SK-N-SH (cell line): ENCODE measurements at regions of chr6 and their contacts with region 1.

Region 1: GRCh38 chr6:151323791-151324487 is 67.4 kb downstream of the ZBTB2 start:
- DNase-seq: peak; percentile 81
- H3K4me3 ChIP-seq: peak overlapping the region in 1 of 2 experiments; percentile 22; a peak in 1 of 4 replicates
- H3K27ac ChIP-seq: peak overlapping the region; percentile 35 to 76
- H3K4me1 ChIP-seq: peaks cover 7 to 14% of the 10 kb centered on the region in 2 experiments; a peak in 3 of 4 replicates
- H3K27me3 ChIP-seq: no peaks in the 10 kb centered on the region
- CTCF ChIP-seq: peak; percentile 90
- EP300 ChIP-seq: no peak
- RAD21 ChIP-seq: peak; percentile 97

Region 2: GRCh38 chr6:150891888-150892485 is 432.0 kb before region 1 on chr6:
- CTCF ChIA-PET with region 1: interaction called, 421 read pairs
- POLR2A ChIA-PET with region 1: interaction called, 3 read pairs
- DNase-seq: peak; percentile 53
- H3K4me3 ChIP-seq: no peak overlapping the region; a peak in 1 of 4 replicates
- H3K27ac ChIP-seq: no peak overlapping the region
- H3K4me1 ChIP-seq: peaks cover 14% of the 10 kb centered on the region in 2 experiments; a peak in 2 of 4 replicates
- H3K27me3 ChIP-seq: no peaks in the 10 kb centered on the region
- CTCF ChIP-seq: peak; percentile 77
- EP300 ChIP-seq: no peak
- RAD21 ChIP-seq: peak; percentile 92

Region 3: GRCh38 chr6:151004415-151005024 is 319.4 kb before region 1 on chr6:
- CTCF ChIA-PET with region 1: interaction called, 371 read pairs
- POLR2A ChIA-PET with region 1: interaction called, 3 read pairs
- DNase-seq: no peak
- H3K4me3 ChIP-seq: no peak overlapping the region
- H3K27ac ChIP-seq: peak overlapping the region; percentile 47 to 74; a peak in 3 of 4 replicates
- H3K4me1 ChIP-seq: peaks cover 3 to 23% of the 10 kb centered on the region in 2 experiments; a peak in 2 of 4 replicates
- H3K27me3 ChIP-seq: no peaks in the 10 kb centered on the region
- CTCF ChIP-seq: no peak
- EP300 ChIP-seq: peak; percentile 18 to 66; a peak in 1 of 4 replicates
- RAD21 ChIP-seq: no peak

Region 4: GRCh38 chr6:151054311-151054710 is 269.6 kb before region 1 on chr6:
- CTCF ChIA-PET with region 1: interaction called, 16 read pairs
- POLR2A ChIA-PET with region 1: no interaction called
- DNase-seq: no peak
- H3K4me3 ChIP-seq: no peak overlapping the region
- H3K27ac ChIP-seq: no peak overlapping the region
- H3K4me1 ChIP-seq: peaks cover 13 to 39% of the 10 kb centered on the region in 2 experiments; a peak in 3 of 4 replicates
- H3K27me3 ChIP-seq: no peaks in the 10 kb centered on the region
- CTCF ChIP-seq: no peak
- EP300 ChIP-seq: no peak
- RAD21 ChIP-seq: no peak

Region 5: GRCh38 chr6:151209071-151209831 is 114.7 kb before region 1 on chr6:
- CTCF ChIA-PET with region 1: interaction called, 10 read pairs
- POLR2A ChIA-PET with region 1: no interaction called
- DNase-seq: peak; percentile 54
- H3K4me3 ChIP-seq: peak overlapping the region; percentile 15 to 37; a peak in 2 of 4 replicates
- H3K27ac ChIP-seq: no peak overlapping the region
- H3K4me1 ChIP-seq: peaks cover 0 to 4% of the 10 kb centered on the region in 2 experiments; a peak in 1 of 4 replicates
- H3K27me3 ChIP-seq: no peaks in the 10 kb centered on the region
- CTCF ChIP-seq: no peak
- EP300 ChIP-seq: no peak
- RAD21 ChIP-seq: no peak

Region 6: DNA sequence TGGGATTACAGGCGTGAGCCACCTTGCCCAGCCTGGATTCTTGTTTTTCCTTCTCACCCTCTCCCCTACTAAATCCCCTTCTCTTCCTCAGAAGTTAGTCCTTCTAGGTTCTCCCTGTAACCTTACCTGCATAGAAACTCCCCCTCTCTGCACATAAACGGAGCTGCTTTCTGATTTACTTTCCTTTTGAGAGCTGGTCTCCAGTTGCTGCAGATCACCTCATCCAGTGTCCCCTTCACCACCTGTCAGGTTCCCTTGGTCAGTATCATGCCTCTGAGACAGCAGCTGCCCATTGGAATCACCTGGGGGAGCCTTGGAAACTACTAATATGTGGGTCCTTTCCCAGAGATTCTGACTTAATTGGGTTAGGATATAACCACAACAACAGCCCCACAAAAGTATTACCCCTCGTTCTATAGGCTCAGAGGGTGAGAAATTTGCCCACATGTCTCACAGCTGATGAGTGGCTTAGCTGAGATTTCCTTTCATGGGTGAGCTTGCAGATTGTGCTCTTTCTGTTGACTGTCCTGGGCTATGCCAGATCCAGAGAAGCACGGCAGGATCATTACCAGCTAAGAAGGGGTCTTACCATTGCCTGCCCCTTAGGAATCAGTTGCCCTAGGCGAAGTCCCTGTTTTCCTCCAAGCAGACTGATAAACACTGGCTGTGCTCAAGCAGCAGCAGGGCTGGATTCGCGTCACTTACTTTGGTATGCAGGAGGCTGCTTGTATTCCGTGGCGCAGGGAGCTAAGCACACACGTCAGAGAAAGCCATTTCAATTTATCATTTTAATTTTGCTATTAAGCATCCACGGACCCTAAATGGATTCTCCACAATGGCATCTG is 32.8 kb before region 1 on chr6:
- CTCF ChIA-PET with region 1: interaction called, 12 read pairs
- POLR2A ChIA-PET with region 1: no interaction called
- DNase-seq: peak; percentile 39
- H3K4me3 ChIP-seq: no peak overlapping the region
- H3K27ac ChIP-seq: peak overlapping the region; percentile 16 to 51; a peak in 3 of 4 replicates
- H3K4me1 ChIP-seq: peaks cover 8 to 23% of the 10 kb centered on the region in 2 experiments; a peak in 3 of 4 replicates
- H3K27me3 ChIP-seq: no peaks in the 10 kb centered on the region
- CTCF ChIP-seq: no peak
- EP300 ChIP-seq: no peak
- RAD21 ChIP-seq: no peak

Region 7: GRCh38 chr6:153002607-153003365 is 1678.8 kb after region 1 on chr6 and contains the start of gene MTRF1L:
- CTCF ChIA-PET with region 1: no interaction called
- POLR2A ChIA-PET with region 1: no interaction called
- DNase-seq: peak; percentile 90
- H3K4me3 ChIP-seq: peak within 1 kb of the TSS; percentile 83 to 97
- H3K27ac ChIP-seq: peak within 1 kb of the TSS; percentile 95 to 96
- H3K4me1 ChIP-seq: peaks cover 0 to 13% of the 10 kb centered on the region in 2 experiments; a peak in 2 of 4 replicates
- H3K27me3 ChIP-seq: no peaks in the 10 kb centered on the region
- CTCF ChIP-seq: no peak
- EP300 ChIP-seq: 0 out of 4 replicates have a peak, but pooled peaks of 1 of the 2 experiments have one; percentile 27
- RAD21 ChIP-seq: no peak
- polyA plus RNA-seq, gene MTRF1L: 7.7 and 9.7 TPM in 2 replicates